ENCODE measurements at regions of chr20 and their contacts with region 1.

Region 1: GRCh38 chr20:55415567-55416142 is 589.7 kb downstream of the CBLN4 start:
- DNase-seq: no peak
- ATAC-seq: peak; percentile 32

Region 2: GRCh38 chr20:56171087-56172012 is 755.7 kb after region 1 on chr20:
- intact Hi-C with region 1: loop called in 1 of 2 experiments (anchors 10 kb)
- DNase-seq: no peak
- ATAC-seq: peak; percentile 79

Measured in left colon (tissue), 2 donors.